ENCODE measurements at regions of chr11 and their contacts with region 1.

Region 1: GRCh38 chr11:61129639-61130523 is 27.6 kb downstream of the CD5 start:
- DNase-seq: peak; percentile 97
- CTCF ChIP-seq: peak; percentile 100

Region 2: DNA sequence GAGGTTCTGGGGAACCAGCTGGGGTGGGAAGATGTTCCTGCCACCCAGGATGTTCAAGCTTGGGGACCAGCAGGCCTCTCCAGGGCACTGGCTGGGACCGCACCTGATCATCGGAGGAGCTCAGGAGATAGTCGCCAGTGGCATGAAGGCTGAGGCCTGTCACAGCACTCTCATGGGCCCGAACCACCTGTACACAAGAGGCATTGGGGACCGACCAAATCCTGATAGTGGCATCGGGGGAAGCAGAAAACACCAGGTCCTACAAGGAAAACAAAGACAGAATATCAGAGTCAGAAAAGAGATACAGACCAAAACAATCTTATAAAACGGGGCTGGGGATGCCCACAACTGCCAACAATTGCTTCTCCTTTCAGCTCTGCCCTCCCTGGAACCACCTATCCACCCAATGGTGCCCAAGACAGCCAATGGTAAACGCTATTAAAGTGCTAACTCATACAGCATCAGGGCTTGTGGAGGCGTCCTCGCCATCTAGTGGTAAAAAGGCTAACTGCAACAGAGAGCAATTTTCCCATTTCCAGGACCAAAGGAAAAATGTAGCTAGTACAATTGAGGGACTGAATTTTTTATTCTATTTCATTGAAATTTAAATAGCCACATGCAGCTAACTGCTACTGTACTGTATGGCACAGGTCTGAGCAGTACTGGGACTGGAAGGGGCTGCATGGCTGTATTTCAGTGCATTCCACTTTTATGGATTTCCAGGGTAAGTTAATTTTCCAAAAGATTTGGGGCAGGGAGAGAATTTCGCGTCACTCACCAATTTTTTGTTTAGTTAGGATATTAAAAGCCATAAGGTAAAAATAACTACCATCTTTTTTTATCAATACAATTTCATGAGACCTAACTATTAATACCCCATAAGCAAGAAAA is 230.6 kb before region 1 on chr11:
- CTCF ChIA-PET with region 1: no interaction called
- POLR2A ChIA-PET with region 1: no interaction called
- DNase-seq: peak; percentile 58
- CTCF ChIP-seq: peak; percentile 89

Region 3: DNA sequence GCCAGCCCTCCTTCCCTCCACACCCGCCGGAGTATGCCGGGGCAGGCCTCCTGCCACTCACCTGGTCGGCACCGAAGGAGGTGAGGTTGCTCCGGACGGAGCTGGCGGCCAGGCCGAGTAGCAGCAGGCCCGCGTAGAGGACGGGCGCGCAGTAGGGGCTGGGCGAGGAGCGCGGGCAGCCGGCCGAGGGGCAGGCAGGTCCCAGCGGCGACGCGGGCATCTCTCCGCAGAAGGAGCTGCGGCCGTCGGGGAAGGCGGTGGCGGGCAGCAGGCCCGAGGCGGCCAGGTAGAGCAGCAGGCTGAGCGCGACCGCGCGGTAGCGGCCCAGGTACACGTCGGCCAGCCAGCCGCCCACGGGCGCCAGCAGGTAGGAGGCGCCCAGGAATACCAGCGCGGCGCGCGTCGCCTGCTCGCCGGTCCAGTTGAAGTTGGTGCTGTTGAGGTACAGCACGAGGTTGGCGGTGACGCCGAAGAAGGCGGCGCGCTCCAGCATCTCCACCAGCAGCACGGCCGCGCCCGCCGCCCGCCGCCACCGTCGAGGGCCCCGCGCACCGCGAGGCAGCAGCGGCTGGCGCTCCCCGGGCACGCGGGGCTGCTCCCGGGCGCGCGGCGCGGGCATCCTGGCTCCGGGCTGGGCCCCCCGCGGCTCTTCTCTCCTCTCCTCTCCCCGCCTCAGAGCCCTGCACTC is 178.8 kb before region 1 on chr11:
- CTCF ChIA-PET with region 1: interaction called, 15 read pairs
- POLR2A ChIA-PET with region 1: no interaction called
- DNase-seq: no peak
- CTCF ChIP-seq: no peak

Region 4: DNA sequence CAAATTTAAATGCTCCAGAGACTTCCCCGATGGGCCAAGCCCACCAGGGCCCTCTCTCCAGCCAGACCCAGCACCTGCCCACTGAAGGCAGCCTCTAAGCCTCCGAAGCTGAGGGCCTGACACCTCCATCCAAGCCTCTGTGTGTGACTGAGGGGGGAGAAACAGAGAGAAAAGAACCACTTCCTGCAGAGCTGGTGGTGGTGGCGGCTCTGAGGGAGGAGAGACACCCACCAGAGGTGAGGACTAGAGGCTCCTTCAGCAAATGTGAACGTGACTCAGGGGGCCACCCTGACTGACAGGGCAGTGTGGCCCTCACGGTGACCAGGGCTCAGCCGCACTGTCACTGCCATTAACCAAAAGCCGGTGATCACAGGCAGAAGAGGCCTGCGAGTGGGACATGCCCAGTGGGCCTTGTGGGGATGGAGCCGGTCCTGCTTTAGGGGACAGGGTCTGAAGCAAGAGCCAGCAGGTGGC is 58.6 kb before region 1 on chr11:
- CTCF ChIA-PET with region 1: interaction called, 16 read pairs
- POLR2A ChIA-PET with region 1: no interaction called
- DNase-seq: peak; percentile 76
- CTCF ChIP-seq: peak; percentile 2

Region 5: GRCh38 chr11:61104963-61105362 is 24.9 kb before region 1 on chr11:
- CTCF ChIA-PET with region 1: interaction called, 103 read pairs
- POLR2A ChIA-PET with region 1: no interaction called
- DNase-seq: no peak
- CTCF ChIP-seq: no peak

Region 6: DNA sequence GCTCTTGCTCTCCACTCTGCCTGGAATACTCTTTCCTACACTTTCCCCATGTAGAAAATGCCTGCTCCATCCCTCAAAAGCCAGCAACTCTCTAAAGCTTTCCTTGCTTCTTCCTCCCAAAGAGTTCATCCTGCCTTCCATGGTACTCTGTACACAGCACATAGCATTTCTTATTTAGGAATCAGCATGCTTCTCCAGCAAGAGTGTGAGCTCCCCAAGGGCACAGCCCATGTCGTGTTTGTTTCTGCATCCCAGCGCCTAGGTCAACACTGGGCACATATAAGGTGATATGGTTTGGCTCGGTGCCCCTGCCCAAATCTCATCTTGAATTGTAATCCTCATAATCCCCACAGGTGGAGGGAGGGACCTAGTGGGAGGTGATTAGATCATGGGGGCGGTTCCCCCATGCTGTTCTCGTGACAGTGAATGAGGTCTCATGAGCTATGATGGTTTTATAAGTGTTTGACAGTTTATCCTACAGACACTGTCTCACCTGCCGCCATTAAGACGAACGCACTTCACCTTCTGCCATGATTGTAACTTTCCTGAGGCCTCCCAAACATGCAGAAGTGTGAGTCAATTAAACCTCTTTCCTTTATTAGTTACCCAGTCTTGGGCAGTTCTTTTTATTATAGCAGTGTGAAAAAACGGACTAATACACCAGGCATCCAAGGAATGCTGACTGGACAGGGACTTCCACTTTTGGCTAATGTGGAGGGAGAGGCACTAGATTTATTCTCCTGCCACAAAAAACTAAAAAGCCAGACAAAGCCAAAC is 23.1 kb after region 1 on chr11:
- CTCF ChIA-PET with region 1: interaction called, 31 read pairs
- POLR2A ChIA-PET with region 1: no interaction called
- DNase-seq: no peak
- CTCF ChIP-seq: no peak

Region 7: DNA sequence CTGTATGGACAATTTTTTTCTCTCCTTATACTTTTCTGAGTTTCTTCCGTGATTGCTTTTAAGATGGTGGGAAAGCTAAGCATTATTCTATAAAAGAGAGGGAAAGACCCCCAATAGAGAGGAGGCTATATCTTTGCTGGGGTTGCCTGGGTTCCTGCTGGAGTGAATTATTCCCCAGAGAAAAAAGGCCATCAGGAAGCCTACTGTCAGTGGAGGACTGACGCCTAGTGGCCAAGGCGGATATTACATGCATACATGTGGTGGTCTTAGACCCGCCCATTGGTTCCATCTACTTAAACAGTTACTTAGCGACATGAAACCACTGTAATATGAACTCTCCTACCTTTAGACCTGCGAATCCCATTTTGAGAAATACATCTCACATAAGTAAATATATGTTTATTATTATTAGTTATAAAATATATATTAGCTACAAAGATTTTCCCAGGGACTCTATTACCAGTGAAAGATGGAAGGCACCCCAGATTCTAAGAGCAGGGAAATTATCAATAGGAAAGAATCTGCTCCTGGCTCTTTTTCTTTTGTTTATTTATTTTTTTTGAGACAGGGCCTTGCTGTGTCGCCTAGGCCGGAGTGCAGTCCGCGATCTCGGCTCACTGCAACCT is 57.7 kb after region 1 on chr11:
- CTCF ChIA-PET with region 1: interaction called, 30 read pairs
- POLR2A ChIA-PET with region 1: no interaction called
- DNase-seq: peak; percentile 82
- CTCF ChIP-seq: peak; percentile 87

Measured in GM10248 (cell line).